ENCODE measurements at regions of chr13 and their contacts with region 1.

Region 1: GRCh38 chr13:27415116-27415515 is 9.3 kb upstream of the GTF3A start:
- DNase-seq: no peak
- H3K4me3 ChIP-seq: no peak overlapping the region
- H3K27ac ChIP-seq: no peak overlapping the region
- H3K4me1 ChIP-seq: no peaks in the 10 kb centered on the region
- H3K27me3 ChIP-seq: peaks cover 0 to 6% (median 0%) of the 10 kb centered on the region in 7 donors
- CTCF ChIP-seq: no peak
- POLR2A ChIP-seq: no peak

Region 2: DNA sequence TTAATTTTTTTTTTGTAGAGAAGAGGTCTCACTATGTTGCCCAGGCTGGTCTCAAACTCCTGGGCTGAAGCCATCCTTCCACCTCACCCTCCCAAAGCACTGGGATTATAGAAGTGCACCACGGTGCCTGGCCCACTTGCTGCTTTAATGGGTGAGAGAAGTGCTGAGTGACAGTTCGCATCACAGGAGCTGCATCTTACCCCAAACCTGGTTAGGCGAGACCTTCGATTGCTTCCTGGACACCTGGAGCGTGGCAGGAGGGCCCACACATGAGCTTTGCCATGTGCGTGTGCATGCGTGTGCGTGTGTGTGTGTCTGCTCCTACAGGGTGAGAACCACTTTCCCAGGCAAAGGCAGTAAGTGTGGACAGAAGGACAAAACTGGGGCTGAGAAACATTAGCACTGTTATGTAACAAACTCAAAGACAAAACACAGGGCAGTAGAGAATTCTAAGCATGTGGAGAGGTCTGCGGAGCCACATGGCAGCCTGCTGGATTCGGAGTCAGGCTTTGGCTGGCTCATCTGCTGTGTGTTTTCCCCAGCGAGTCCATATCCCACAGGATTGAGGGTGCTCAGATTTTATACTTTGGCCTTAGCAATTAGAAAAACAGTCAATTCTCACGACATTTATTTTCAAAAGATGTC is 46.9 kb after region 1 on chr13:
- intact Hi-C with region 1: loop called (anchors 10 kb)
- DNase-seq: no peak
- H3K4me3 ChIP-seq: no peak overlapping the region
- H3K27ac ChIP-seq: no peak overlapping the region
- H3K4me1 ChIP-seq: peaks cover 0 to 7% (median 2%) of the 10 kb centered on the region in 6 donors
- H3K27me3 ChIP-seq: no peaks in the 10 kb centered on the region
- CTCF ChIP-seq: no peak
- POLR2A ChIP-seq: no peak